ENCODE measurements at regions of chr12 and their contacts with region 1.

Region 1: DNA sequence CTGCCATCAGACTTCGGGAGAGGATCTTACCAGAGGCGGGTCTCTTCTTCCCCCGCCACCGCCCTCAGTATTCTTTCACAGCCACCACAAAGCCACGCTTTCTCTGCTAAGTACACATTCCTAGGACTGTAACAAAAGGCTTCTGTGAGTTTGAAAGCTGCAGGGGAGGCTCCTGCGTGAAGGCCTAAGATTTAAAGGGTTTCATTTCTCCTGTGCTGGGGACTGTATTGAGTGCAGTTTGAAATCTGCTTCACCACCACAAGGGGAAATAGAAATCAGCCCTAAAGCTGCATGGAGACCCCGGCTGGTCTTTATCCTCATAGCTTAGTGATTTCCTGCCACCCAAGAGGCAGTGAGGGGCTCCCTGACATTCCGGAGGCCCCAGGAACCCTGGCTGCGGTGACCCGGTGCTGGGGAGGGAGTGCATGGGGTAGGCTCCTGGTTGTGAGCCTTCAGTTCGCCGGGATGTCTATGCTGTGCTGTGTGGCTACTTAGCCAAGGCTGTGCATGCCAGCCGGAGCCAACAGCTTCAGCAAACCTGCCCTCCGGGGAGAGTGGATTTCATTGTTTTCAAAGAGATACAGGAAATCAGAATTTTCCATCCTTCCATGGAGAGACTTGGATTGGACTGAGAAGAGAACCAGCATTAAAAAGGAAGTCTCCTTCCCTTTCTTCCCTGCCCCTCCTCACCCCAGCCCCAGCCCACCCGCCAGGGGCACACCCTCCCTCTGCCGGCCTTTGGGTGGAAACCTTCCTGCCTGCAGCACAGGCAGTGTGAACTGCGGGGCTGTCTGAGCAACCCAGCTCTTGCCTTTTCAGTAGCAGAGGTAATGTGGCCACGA is 163.3 kb downstream of the ETV6 start:
- DNase-seq: peak; percentile 73
- H3K4me3 ChIP-seq: peak overlapping the region; percentile 54
- H3K27ac ChIP-seq: peak overlapping the region; percentile 78
- H3K4me1 ChIP-seq: peaks cover 64% of the 10 kb centered on the region
- CTCF ChIP-seq: peak; percentile 54

Region 2: DNA sequence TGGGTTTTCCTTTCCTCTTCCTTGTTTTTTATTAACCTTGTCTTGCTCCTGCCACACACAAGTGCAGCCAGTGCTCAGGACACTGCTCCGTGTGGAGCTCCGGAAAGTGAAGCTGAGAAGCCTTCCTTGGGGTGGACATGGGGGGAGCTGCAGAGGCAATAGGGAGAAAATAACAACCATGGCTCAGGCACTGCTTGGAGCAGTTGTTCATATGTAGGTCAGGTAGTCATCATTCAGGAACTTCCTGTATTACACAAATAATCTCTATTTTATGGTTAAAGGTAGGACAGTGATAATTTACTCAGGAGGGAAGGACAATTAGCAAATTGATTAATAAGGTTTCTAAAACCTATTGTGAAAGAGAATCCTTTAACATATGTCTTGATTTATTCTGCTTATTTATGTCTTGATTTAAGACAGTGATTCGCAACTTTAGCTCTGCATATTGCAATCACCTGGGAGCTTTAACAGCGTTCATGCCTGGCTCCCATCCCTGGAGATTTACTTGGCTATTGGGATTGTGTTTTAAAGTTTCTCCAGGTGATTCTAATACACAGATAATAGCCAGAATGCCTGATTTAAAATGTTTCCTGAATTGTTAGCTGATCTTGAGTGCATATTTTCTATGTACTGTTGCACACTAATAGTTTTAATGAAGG is 71.2 kb before region 1 on chr12:
- CTCF ChIA-PET with region 1: no interaction called
- POLR2A ChIA-PET with region 1: no interaction called
- intact Hi-C with region 1: no loop called
- DNase-seq: no peak
- H3K4me3 ChIP-seq: no peak overlapping the region
- H3K27ac ChIP-seq: no peak overlapping the region
- H3K4me1 ChIP-seq: peaks cover 89% of the 10 kb centered on the region
- CTCF ChIP-seq: no peak

Region 3: GRCh38 chr12:11765817-11766794 is 46.7 kb before region 1 on chr12:
- CTCF ChIA-PET with region 1: interaction called, 25 read pairs
- POLR2A ChIA-PET with region 1: interaction called, 5 read pairs
- intact Hi-C with region 1: no loop called
- DNase-seq: no peak
- H3K4me3 ChIP-seq: peak overlapping the region; percentile 4
- H3K27ac ChIP-seq: peak overlapping the region; percentile 26
- H3K4me1 ChIP-seq: peaks cover 84% of the 10 kb centered on the region
- CTCF ChIP-seq: no peak

Region 4: GRCh38 chr12:11981121-11981733 is 168.4 kb after region 1 on chr12:
- CTCF ChIA-PET with region 1: no interaction called
- POLR2A ChIA-PET with region 1: no interaction called
- intact Hi-C with region 1: no loop called
- DNase-seq: no peak
- H3K4me3 ChIP-seq: no peak overlapping the region
- H3K27ac ChIP-seq: no peak overlapping the region
- H3K4me1 ChIP-seq: no peaks in the 10 kb centered on the region
- CTCF ChIP-seq: no peak